Activated CD4-positive, alpha-beta T cell treated with anti-CD3 and anti-CD28 coated beads, Interleukin-2, amount 10 ng/mL, durations not matched to agents 24 days and 14 days (primary cell): ENCODE measurements at regions of chr13 and their contacts with region 1.

Region 1: DNA sequence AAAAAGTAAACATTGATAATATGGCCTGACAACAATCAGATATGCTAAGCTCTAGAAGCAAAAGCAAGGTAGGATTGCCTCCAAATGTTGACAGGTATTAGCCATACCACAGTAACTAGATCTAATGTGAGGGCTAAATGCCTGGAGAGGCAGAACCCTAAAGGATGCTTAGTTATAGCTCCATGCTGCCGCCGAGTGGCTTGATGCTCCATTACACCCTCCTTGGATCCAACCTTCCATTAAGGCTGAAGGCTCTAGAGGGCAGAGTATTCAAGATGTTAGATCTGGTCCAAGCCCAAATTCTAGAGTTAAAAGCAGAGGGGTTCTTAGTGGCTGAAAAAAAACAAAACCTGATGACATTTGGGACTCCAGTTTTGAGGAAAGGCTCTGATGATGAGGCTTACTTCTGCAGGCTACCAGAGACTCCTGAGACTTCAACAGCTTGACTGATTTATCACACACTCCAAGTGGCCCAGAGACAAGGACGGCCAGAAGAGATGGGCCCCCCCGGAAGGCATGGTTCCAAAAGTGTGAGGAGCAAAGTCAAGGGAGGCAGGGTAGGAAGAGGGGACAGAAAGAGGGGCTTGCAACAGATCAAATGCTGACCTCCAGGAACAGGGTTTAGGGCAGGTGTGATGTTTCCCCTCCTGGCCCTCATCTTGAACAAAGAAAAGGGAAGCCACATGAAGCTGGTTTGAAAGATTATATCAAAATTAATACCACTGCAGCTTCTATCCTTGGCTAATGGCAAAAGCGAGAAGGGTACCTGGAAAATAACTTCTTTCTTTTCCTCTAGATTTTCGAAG is 21.9 kb upstream of the CPB2 start:
- DNase-seq: peak; percentile 90
- H3K4me3 Mint-ChIP-seq: no peak overlapping the region
- H3K27ac Mint-ChIP-seq: peak overlapping the region; percentile 59
- H3K4me1 Mint-ChIP-seq: peaks cover 21% of the 10 kb centered on the region
- H3K27me3 Mint-ChIP-seq: no peaks in the 10 kb centered on the region

Region 2: DNA sequence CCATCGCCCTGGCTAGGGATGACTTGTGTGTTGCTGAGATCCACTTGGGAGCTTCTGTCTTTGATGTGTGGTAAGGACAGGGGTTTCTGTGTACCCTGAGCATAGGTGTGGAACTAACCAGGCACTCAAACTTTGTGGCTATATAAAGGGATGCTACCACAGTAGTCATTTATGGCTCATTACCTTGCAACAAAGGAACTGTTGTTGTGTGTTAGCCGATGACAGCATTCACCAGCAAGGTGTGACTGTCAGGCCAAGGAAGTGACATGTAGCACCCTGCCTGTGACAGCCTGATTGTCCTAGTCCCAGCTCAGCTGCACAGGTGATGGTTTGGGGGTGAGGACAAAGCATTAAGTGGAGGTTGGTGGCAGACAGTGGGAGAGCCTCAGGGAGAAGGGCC is 588.4 kb before region 1 on chr13:
- intact Hi-C with region 1: loop called (anchors 10 kb)
- DNase-seq: no peak
- H3K4me3 Mint-ChIP-seq: no peak overlapping the region
- H3K27ac Mint-ChIP-seq: no peak overlapping the region
- H3K4me1 Mint-ChIP-seq: peaks cover 3% of the 10 kb centered on the region
- H3K27me3 Mint-ChIP-seq: no peaks in the 10 kb centered on the region

Region 3: GRCh38 chr13:45974500-45974899 is 152.3 kb before region 1 on chr13:
- intact Hi-C with region 1: no loop called
- DNase-seq: no peak
- H3K4me3 Mint-ChIP-seq: no peak overlapping the region
- H3K27ac Mint-ChIP-seq: no peak overlapping the region
- H3K4me1 Mint-ChIP-seq: peaks cover 7% of the 10 kb centered on the region
- H3K27me3 Mint-ChIP-seq: no peaks in the 10 kb centered on the region